HCT116 (cell line): ENCODE measurements at regions of chr15 and their contacts with region 1.

Region 1: GRCh38 chr15:69735121-69735520 is 282.5 kb downstream of the RPLP1 start:
- DNase-seq: no peak
- ATAC-seq: no peak
- H3K4me3 ChIP-seq: no peak overlapping the region
- H3K27ac ChIP-seq: no peak overlapping the region
- H3K4me1 ChIP-seq: no peaks in the 10 kb centered on the region
- H3K27me3 ChIP-seq: peaks cover 19% of the 10 kb centered on the region
- CTCF ChIP-seq: no peak
- POLR2A ChIP-seq: no peak
- RAD21 ChIP-seq: no peak

Region 2: GRCh38 chr15:69962561-69962960 is 227.4 kb after region 1 on chr15:
- CTCF ChIA-PET with region 1: no interaction called
- POLR2A ChIA-PET with region 1: no interaction called
- RAD21 ChIA-PET with region 1: no interaction called
- intact Hi-C with region 1: loop called (anchors 10 kb)
- DNase-seq: no peak
- ATAC-seq: no peak
- H3K4me3 ChIP-seq: no peak overlapping the region
- H3K27ac ChIP-seq: no peak overlapping the region
- H3K4me1 ChIP-seq: no peaks in the 10 kb centered on the region
- H3K27me3 ChIP-seq: peaks cover 12% of the 10 kb centered on the region
- CTCF ChIP-seq: no peak
- POLR2A ChIP-seq: no peak
- RAD21 ChIP-seq: no peak

Region 3: GRCh38 chr15:70299931-70300869 is 565.1 kb after region 1 on chr15:
- CTCF ChIA-PET with region 1: no interaction called
- POLR2A ChIA-PET with region 1: no interaction called
- RAD21 ChIA-PET with region 1: no interaction called
- intact Hi-C with region 1: no loop called
- DNase-seq: no peak
- ATAC-seq: no peak
- H3K4me3 ChIP-seq: no peak overlapping the region
- H3K27ac ChIP-seq: no peak overlapping the region
- H3K4me1 ChIP-seq: no peaks in the 10 kb centered on the region
- H3K27me3 ChIP-seq: no peaks in the 10 kb centered on the region
- CTCF ChIP-seq: no peak
- POLR2A ChIP-seq: no peak
- RAD21 ChIP-seq: no peak